ENCODE measurements at regions of chr17 and their contacts with region 1.

Region 1: GRCh38 chr17:76868176-76868668 is at the start of gene MGAT5B:
- DNase-seq: peak; percentile 85 to 95 (median 91)
- ATAC-seq: peak; percentile 94
- H3K4me3 ChIP-seq: peak within 1 kb of the TSS; percentile 56
- H3K27ac ChIP-seq: no peak within 1 kb of the TSS
- H3K4me1 ChIP-seq: peaks cover 2% of the 10 kb centered on the region
- H3K27me3 ChIP-seq: no peaks in the 10 kb centered on the region
- total RNA-seq, gene MGAT5B: 0.12 TPM in 1 of 4 donors, not detected in the others

Region 2: GRCh38 chr17:76887802-76888201 is 19.6 kb after region 1 on chr17:
- intact Hi-C with region 1: no loop called
- DNase-seq: peak in 1 of 3 donors; percentile 3
- ATAC-seq: peak in 1 of 2 donors; percentile 36
- H3K4me3 ChIP-seq: no peak overlapping the region
- H3K27ac ChIP-seq: no peak overlapping the region
- H3K4me1 ChIP-seq: no peaks in the 10 kb centered on the region
- H3K27me3 ChIP-seq: no peaks in the 10 kb centered on the region

Region 3: GRCh38 chr17:77054936-77055335 is 186.7 kb after region 1 on chr17:
- intact Hi-C with region 1: loop called in 3 of 4 experiments (anchors 2 to 5 kb)
- DNase-seq: no peak
- ATAC-seq: no peak
- H3K4me3 ChIP-seq: no peak overlapping the region
- H3K27ac ChIP-seq: no peak overlapping the region
- H3K4me1 ChIP-seq: no peaks in the 10 kb centered on the region
- H3K27me3 ChIP-seq: no peaks in the 10 kb centered on the region

Region 4: GRCh38 chr17:77068915-77069314 is 200.7 kb after region 1 on chr17:
- intact Hi-C with region 1: loop called in 2 of 4 experiments (anchors 2 to 5 kb)
- DNase-seq: no peak
- ATAC-seq: no peak
- H3K4me3 ChIP-seq: no peak overlapping the region
- H3K27ac ChIP-seq: no peak overlapping the region
- H3K4me1 ChIP-seq: no peaks in the 10 kb centered on the region
- H3K27me3 ChIP-seq: no peaks in the 10 kb centered on the region

Region 5: DNA sequence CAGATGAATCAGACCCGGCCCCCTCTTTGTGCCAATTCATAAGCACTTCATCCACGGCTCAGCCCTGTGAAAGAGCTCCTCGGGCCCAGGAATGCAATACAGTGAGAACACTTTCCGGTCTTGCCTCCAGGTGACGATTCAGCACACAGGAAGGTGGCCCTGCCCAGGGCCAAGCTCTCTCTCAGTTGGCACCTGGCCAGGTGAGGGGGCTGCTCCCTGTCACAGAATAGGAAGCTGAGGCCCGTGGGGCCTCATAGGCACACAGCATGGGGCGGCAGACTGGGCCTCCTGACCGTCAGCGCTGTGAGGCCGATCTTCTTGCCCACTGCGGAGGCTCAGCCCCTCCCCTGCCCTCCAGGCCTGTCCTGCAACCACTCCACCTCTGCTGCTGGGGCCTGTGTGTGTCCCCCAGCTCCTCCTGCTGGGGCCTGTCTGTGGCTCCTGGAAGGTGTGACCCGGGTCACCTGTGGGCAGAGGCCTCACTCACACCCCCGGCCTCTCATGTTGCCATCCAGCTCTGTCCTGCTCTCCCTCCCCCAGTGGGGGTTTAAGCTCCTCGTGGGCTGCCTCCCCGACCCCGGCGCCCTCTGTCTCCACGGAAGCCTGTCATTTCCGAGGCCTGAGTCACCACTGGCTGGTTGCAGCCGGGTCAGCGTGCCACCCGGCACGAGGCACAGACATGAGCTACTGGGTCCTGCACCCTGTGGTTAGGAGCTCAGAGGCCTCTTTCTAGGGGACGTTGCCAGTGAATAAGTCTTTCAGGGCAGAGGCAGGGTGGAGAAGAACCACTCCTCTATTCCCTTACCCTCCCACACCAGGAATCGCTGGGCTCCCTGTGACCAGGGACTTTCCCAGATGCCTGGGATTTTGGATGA is 387.0 kb after region 1 on chr17:
- intact Hi-C with region 1: loop called in 1 of 4 experiments (anchors 10 kb)
- DNase-seq: peak in 1 of 3 donors; percentile 46
- ATAC-seq: peak; percentile 22 to 36
- H3K4me3 ChIP-seq: no peak overlapping the region
- H3K27ac ChIP-seq: no peak overlapping the region
- H3K4me1 ChIP-seq: no peaks in the 10 kb centered on the region
- H3K27me3 ChIP-seq: no peaks in the 10 kb centered on the region

Measured in right cardiac atrium (tissue), 5 donors.